ENCODE measurements at regions of chr5 and their contacts with region 1.

Region 1: GRCh38 chr5:159262859-159263567 is at the start of gene UBLCP1:
- DNase-seq: peak; percentile 88
- H3K4me3 Mint-ChIP-seq: peak within 1 kb of the TSS; percentile 97
- H3K27ac Mint-ChIP-seq: peak within 1 kb of the TSS; percentile 94
- H3K4me1 Mint-ChIP-seq: peaks cover 35% of the 10 kb centered on the region
- H3K27me3 Mint-ChIP-seq: no peaks in the 10 kb centered on the region
- total RNA-seq, gene UBLCP1: 32.9 to 34.4 TPM

Region 2: DNA sequence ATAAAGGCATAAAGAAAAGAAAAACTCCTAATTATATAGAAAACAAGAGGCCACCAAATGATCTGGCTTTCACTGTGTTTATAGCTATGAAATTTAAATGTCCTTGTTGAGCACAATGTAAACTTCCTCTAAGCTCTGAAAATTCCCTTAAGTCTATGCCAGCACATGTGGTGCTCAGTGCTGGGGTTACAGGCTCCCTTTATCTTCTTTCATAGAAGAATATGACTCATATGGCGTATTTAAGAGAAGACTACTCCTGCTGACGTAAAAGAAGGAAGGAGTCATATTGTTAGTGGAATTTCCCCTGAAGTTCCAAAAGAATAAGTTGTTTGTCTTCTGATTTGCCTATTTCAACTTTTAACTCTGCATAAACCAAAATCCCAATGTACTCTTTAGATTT is 84.0 kb before region 1 on chr5:
- CTCF ChIA-PET with region 1: no interaction called
- POLR2A ChIA-PET with region 1: interaction called, 3 read pairs
- intact Hi-C with region 1: loop called (anchors 1 kb)
- DNase-seq: peak; percentile 56
- H3K4me3 Mint-ChIP-seq: peak overlapping the region; percentile 3
- H3K27ac Mint-ChIP-seq: peak overlapping the region; percentile 93
- H3K4me1 Mint-ChIP-seq: peaks cover 87% of the 10 kb centered on the region
- H3K27me3 Mint-ChIP-seq: no peaks in the 10 kb centered on the region

Region 3: DNA sequence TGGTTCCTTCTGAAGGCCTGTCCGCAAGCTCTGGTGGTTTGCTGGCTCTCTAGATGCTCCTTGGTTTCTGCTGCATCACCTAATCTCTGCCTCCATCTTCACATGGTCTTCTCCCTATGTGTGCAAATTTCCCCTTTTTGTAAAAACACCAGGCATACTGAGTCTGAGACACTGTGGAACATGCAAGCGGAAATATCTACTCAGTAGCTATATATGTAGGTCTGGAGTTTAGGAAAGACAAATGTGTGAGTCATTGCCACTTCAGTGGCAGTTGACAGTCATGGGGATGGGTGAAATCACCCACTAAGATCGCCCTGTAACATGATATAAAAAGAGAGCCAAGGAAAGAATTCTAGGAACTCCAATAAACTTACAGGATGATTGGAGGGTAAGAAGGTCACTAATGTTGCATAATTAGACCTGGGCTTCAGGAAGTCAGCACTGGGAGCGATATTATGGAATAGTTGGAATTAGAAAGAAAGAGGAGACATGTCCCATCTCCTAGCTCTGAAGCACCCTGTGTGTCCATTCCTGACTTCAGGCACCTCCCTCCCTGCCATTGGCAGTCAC is 22.6 kb before region 1 on chr5:
- CTCF ChIA-PET with region 1: no interaction called
- POLR2A ChIA-PET with region 1: no interaction called
- intact Hi-C with region 1: loop called (anchors 1 kb)
- DNase-seq: peak; percentile 25
- H3K4me3 Mint-ChIP-seq: no peak overlapping the region
- H3K27ac Mint-ChIP-seq: peak overlapping the region; percentile 44
- H3K4me1 Mint-ChIP-seq: peaks cover 42% of the 10 kb centered on the region
- H3K27me3 Mint-ChIP-seq: no peaks in the 10 kb centered on the region

Region 4: GRCh38 chr5:159669559-159669958 is 406.5 kb after region 1 on chr5:
- CTCF ChIA-PET with region 1: no interaction called
- POLR2A ChIA-PET with region 1: no interaction called
- intact Hi-C with region 1: no loop called
- DNase-seq: no peak
- H3K4me3 Mint-ChIP-seq: no peak overlapping the region
- H3K27ac Mint-ChIP-seq: no peak overlapping the region
- H3K4me1 Mint-ChIP-seq: peaks cover 3% of the 10 kb centered on the region
- H3K27me3 Mint-ChIP-seq: no peaks in the 10 kb centered on the region

Region 5: GRCh38 chr5:159773062-159773924 is 510.3 kb after region 1 on chr5:
- CTCF ChIA-PET with region 1: no interaction called
- POLR2A ChIA-PET with region 1: no interaction called
- intact Hi-C with region 1: loop called (anchors 10 kb)
- DNase-seq: peak; percentile 92
- H3K4me3 Mint-ChIP-seq: peak overlapping the region; percentile 39
- H3K27ac Mint-ChIP-seq: peak overlapping the region; percentile 69
- H3K4me1 Mint-ChIP-seq: peaks cover 14% of the 10 kb centered on the region
- H3K27me3 Mint-ChIP-seq: peaks cover 45% of the 10 kb centered on the region

Region 6: DNA sequence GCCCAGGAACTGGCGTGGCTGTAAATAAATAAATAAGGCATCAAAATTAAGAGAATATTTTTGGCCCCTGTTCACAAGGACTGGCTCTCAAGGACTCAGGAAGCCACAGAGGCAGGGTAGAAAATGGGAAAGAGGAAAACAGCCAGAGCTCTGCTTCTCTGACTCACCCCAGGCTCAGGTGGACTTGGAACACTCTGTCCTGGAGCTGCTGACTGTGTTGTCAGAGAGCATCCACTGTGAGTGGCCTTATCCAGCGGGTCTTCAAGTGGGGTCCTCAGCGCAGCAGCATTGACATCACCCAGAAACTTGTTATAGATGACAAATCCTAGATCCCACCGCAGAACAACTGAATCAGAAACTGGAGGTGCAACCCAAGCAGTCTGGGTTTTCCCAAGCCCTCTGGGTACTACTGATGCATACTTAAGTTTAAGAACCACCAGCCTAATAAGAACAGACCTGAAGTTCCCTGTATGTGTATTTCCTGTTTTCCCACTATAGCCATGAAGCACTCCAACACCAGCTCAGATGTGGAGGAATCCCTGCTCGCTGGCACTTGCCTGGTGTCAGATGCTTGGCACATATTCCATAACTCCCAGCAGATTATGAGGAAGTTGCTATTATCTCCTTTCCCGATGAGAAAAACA is 673.8 kb after region 1 on chr5:
- CTCF ChIA-PET with region 1: no interaction called
- POLR2A ChIA-PET with region 1: no interaction called
- intact Hi-C with region 1: no loop called
- DNase-seq: no peak
- H3K4me3 Mint-ChIP-seq: no peak overlapping the region
- H3K27ac Mint-ChIP-seq: no peak overlapping the region
- H3K4me1 Mint-ChIP-seq: no peaks in the 10 kb centered on the region
- H3K27me3 Mint-ChIP-seq: peaks cover 18% of the 10 kb centered on the region

Measured in activated CD4-positive, alpha-beta memory T cell treated with anti-CD3 and anti-CD28 coated beads for 36 hours (primary cell).